IMR-90 (cell line): ENCODE measurements at regions of chr17 and their contacts with region 1.

Region 1: DNA sequence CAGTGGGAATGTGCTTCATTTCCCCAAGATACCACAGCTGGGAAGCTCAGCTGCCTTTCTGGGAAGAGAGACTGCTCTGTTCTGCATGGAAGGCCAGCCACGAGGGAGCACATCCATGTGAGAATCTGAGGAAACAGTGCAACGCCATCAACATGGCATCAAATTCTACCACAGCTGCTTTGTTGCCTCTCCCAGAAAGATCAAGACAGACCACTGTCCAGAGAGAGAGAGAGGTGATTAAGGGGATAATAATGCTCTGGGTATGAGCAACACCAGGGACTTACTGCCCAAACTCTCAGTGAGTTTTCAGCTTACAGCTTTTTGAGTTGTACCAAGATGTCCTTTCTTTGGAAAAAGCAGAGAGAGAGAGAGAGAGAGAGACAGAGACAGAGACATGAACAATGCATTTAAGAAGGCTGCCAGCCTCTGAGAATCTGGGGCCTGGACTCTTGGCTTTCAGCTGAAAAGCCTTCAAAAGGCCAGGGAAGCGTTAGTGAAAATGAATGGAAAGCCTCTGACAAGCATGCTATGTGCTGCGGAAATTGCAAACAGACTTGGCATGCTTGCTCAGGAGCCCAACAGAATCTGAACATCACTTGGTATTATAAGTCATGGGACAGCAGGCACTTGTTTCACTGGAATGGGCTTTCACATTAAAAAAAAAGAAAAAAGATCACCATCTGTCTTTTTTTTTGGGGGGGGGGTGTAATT is 223.1 kb downstream of the MAP2K6 start:
- DNase-seq: peak; percentile 81
- ATAC-seq: peak; percentile 92
- H3K4me3 ChIP-seq: no peak overlapping the region
- H3K27ac ChIP-seq: peak overlapping the region; percentile 65
- H3K4me1 ChIP-seq: peaks cover 8% of the 10 kb centered on the region
- H3K27me3 ChIP-seq: no peaks in the 10 kb centered on the region
- CTCF ChIP-seq: no peak
- POLR2A ChIP-seq: no peak
- RAD21 ChIP-seq: no peak

Region 2: GRCh38 chr17:69533481-69534234 is 103.9 kb before region 1 on chr17:
- CTCF ChIA-PET with region 1: no interaction called
- POLR2A ChIA-PET with region 1: no interaction called
- dilution Hi-C with region 1: no loop called
- in situ Hi-C with region 1: no loop called
- intact Hi-C with region 1: no loop called
- DNase-seq: no peak
- ATAC-seq: no peak
- H3K4me3 ChIP-seq: no peak overlapping the region
- H3K27ac ChIP-seq: no peak overlapping the region
- H3K4me1 ChIP-seq: no peaks in the 10 kb centered on the region
- H3K27me3 ChIP-seq: no peaks in the 10 kb centered on the region
- CTCF ChIP-seq: no peak
- POLR2A ChIP-seq: no peak
- RAD21 ChIP-seq: no peak

Region 3: DNA sequence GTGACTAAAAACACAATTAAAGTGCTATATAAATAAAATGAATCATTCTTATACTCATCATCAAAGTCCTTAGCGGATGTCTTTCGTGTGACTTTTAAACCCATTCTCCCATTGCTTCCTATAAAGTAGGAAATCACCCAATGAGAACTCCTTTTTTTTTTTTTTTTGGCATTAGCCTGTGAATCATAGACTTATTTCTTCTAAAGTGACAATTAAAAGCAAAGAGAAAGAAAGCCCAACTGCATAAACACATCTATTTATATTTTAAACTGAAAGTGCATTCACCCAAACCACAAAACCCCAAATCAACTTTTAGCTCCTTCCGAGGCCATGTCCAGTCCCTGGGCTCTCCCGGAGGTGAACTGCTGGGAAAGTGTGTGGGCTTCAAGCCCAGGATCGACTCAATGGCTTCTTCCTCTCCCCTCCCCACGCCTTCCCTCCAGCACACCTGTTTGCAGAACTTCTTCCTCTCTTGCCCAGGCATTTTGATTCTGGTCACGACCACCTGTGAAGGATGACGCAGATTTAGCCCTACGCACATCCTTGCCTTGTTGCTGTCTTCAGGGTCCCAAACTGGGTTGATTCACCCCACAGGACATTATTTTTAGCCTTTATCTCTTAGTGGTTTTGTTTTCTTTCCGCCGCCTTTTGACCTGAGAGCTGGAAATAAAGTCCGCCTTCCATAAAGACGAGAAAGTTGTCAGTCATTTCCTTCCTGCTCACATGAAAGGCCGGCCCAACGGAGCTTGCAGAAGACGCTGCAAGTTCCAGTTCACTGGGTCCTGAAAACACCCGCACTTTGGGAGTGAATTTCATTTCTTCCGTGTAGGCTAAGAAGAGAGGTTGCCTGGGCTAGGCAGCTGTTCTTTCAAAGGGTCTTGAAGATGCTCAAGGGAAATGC is 56.3 kb before region 1 on chr17:
- CTCF ChIA-PET with region 1: no interaction called
- POLR2A ChIA-PET with region 1: no interaction called
- dilution Hi-C with region 1: no loop called
- in situ Hi-C with region 1: no loop called
- intact Hi-C with region 1: no loop called
- DNase-seq: peak; percentile 47
- ATAC-seq: peak; percentile 48
- H3K4me3 ChIP-seq: no peak overlapping the region
- H3K27ac ChIP-seq: peak overlapping the region; percentile 80; the same call in 1 of the 2 replicates
- H3K4me1 ChIP-seq: peaks cover 4% of the 10 kb centered on the region
- H3K27me3 ChIP-seq: no peaks in the 10 kb centered on the region
- CTCF ChIP-seq: no peak
- POLR2A ChIP-seq: no peak
- RAD21 ChIP-seq: no peak

Region 4: GRCh38 chr17:69853541-69854224 is 216.1 kb after region 1 on chr17:
- CTCF ChIA-PET with region 1: no interaction called
- POLR2A ChIA-PET with region 1: no interaction called
- dilution Hi-C with region 1: loop called (anchors 10 kb)
- in situ Hi-C with region 1: no loop called
- intact Hi-C with region 1: no loop called
- DNase-seq: no peak
- ATAC-seq: peak; percentile 47
- H3K4me3 ChIP-seq: no peak overlapping the region
- H3K27ac ChIP-seq: no peak overlapping the region
- H3K4me1 ChIP-seq: peaks cover 4% of the 10 kb centered on the region; the same call in 1 of the 2 replicates
- H3K27me3 ChIP-seq: no peaks in the 10 kb centered on the region
- CTCF ChIP-seq: no peak
- POLR2A ChIP-seq: no peak
- RAD21 ChIP-seq: no peak